ENCODE measurements at regions of chr5 and their contacts with region 1.

Region 1: DNA sequence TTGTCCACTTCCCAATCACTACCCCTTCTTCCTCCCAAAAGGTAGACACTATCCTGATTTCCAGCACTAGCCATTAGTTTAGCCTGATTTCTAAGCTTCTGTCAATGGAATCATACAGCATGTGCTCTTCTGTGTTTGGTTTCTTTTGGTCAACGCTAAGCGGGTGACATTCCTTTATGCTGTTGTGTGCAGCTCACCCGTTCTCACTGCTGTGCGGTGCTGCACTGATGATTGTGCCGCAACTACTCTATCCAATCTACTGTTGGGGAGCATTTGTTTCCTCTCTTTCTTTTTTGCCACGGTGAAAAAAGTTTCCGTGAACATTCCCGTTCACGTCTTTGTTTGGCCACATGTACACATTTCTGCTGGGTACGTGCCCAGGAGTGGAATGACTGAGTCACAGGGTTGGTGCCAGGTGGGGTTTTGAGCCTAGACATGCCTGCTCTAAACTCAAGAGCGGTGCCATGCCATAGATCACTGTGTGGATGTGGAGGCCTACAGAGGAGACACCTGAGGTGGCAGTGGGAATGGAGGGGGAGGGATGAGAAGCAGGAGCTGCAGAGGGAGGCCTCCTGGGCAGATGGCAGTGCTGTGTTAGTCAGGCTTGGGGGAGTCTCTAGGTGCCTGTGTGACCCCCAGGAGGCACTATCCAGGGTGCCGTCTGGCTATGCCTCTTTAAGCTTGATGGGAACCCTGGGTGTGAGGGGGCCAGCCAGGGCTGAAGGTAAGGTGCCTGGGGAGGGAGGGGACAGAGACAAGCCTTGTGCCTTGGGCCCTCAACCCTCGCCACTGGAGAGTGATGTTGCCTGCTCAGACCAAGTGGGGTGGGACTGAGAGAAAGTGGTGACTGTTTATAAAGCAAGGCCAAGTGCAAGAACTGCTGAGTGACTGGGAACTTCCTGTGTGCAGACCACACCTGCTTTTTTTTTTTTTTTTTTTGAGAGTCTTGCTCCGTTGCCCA is 11.4 kb upstream of the ANKRD33B start:
- DNase-seq: no peak
- ATAC-seq: no peak
- H3K4me3 ChIP-seq: no peak overlapping the region
- H3K27ac ChIP-seq: no peak overlapping the region
- H3K4me1 ChIP-seq: no peaks in the 10 kb centered on the region
- H3K27me3 ChIP-seq: no peaks in the 10 kb centered on the region

Region 2: GRCh38 chr5:8710426-8710930 is 1842.0 kb before region 1 on chr5:
- intact Hi-C with region 1: no loop called
- DNase-seq: no peak
- ATAC-seq: no peak
- H3K4me3 ChIP-seq: no peak overlapping the region
- H3K27ac ChIP-seq: no peak overlapping the region
- H3K4me1 ChIP-seq: no peaks in the 10 kb centered on the region
- H3K27me3 ChIP-seq: no peaks in the 10 kb centered on the region

Region 3: DNA sequence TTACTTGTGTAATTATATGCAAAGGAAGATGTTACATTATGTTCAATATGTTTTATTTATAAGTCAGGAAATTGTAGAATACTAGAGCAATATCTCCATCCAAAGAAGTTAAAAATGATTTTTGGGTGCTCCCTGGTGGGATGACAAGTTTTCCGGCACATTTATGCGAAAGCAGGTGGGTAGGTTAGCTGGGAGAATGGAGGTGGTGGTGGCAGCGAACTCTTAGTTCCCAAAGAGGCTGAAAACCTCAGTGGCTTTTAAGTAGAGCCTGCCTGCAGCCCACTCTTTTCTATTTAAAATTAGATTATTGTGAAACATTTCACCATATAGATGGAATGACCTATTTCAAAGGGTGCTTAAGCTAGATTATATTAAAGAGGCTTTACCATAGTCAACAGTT is 63.2 kb after region 1 on chr5:
- intact Hi-C with region 1: loop called in 1 of 2 experiments (anchors 5 kb)
- DNase-seq: no peak
- ATAC-seq: no peak
- H3K4me3 ChIP-seq: no peak overlapping the region
- H3K27ac ChIP-seq: no peak overlapping the region
- H3K4me1 ChIP-seq: no peaks in the 10 kb centered on the region
- H3K27me3 ChIP-seq: no peaks in the 10 kb centered on the region

Measured in aorta (tissue), 5 donors.